Mammary epithelial cell (primary cell): ENCODE measurements at regions of chr7 and their contacts with region 1.

Region 1: GRCh38 chr7:50812841-50813475 is 30.3 kb upstream of the GRB10 start:
- DNase-seq: peak; percentile 83
- H3K4me3 ChIP-seq: no peak overlapping the region
- H3K27ac ChIP-seq: no peak overlapping the region
- H3K4me1 ChIP-seq: peaks cover 16% of the 10 kb centered on the region
- H3K27me3 ChIP-seq: no peaks in the 10 kb centered on the region
- CTCF ChIP-seq: no peak

Region 2: DNA sequence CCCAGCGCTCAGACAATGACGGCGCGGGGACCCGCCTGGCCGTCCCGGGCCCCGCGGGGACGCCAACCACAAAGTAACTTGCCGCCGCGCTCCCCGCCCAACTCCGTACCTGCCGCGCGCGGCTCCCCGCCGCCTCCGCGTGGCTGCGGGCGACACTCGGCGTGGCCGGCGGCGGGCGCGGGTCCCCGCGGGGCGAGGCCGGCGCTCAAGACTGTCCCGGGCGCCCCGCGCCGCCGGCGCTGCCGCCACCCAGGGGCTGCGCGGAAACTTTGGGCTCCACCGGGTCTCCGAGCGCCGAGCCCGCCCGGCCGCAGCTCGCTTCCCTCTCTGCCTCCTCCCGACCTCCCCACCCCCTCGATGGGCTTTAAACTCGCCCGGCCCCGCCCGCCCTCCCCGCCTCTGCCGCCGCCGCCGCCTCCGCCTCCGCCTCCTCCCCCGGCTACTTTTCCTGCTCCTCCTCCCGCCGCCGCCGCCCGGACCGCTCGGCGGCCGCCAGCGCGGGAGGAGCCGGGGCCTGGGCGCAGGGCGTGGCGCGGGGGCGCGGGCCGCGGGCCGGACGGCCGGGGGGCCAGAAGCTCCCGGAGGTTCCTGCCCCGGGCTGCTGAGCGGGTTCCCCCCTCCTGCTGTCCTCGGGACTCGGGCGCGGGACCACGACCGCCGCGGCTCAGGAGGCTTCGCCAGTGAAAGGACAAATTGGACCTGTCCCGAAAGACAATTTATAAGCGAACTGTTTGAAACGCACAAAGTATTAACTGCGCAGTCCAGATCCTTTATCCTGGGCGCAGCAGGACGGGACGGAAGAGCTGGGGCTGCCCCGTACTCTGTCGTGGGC is 19.6 kb before region 1 on chr7:
- CTCF ChIA-PET with region 1: no interaction called
- dilution Hi-C with region 1: no loop called
- in situ Hi-C with region 1: no loop called
- intact Hi-C with region 1: no loop called
- DNase-seq: no peak
- H3K4me3 ChIP-seq: peak overlapping the region in 2 of 3 experiments; percentile 37 to 53
- H3K27ac ChIP-seq: no peak overlapping the region
- H3K4me1 ChIP-seq: no peaks in the 10 kb centered on the region
- H3K27me3 ChIP-seq: peaks cover 13% of the 10 kb centered on the region
- CTCF ChIP-seq: no peak

Region 3: GRCh38 chr7:50826371-50827172 is 13.6 kb after region 1 on chr7:
- CTCF ChIA-PET with region 1: no interaction called
- dilution Hi-C with region 1: no loop called
- in situ Hi-C with region 1: no loop called
- intact Hi-C with region 1: loop called (anchors 2 kb)
- DNase-seq: peak; percentile 95
- H3K4me3 ChIP-seq: no peak overlapping the region
- H3K27ac ChIP-seq: no peak overlapping the region
- H3K4me1 ChIP-seq: peaks cover 19% of the 10 kb centered on the region
- H3K27me3 ChIP-seq: peaks cover 3% of the 10 kb centered on the region
- CTCF ChIP-seq: peak in 1 of 2 donors; percentile 5

Region 4: GRCh38 chr7:50863053-50863452 is 50.1 kb after region 1 on chr7:
- CTCF ChIA-PET with region 1: no interaction called
- dilution Hi-C with region 1: loop called (anchors 5 kb)
- in situ Hi-C with region 1: no loop called
- intact Hi-C with region 1: no loop called
- DNase-seq: no peak
- H3K4me3 ChIP-seq: no peak overlapping the region
- H3K27ac ChIP-seq: no peak overlapping the region
- H3K4me1 ChIP-seq: no peaks in the 10 kb centered on the region
- H3K27me3 ChIP-seq: no peaks in the 10 kb centered on the region
- CTCF ChIP-seq: no peak